Mammary epithelial cell (primary cell): ENCODE measurements at regions of chr3 and their contacts with region 1.

Region 1: DNA sequence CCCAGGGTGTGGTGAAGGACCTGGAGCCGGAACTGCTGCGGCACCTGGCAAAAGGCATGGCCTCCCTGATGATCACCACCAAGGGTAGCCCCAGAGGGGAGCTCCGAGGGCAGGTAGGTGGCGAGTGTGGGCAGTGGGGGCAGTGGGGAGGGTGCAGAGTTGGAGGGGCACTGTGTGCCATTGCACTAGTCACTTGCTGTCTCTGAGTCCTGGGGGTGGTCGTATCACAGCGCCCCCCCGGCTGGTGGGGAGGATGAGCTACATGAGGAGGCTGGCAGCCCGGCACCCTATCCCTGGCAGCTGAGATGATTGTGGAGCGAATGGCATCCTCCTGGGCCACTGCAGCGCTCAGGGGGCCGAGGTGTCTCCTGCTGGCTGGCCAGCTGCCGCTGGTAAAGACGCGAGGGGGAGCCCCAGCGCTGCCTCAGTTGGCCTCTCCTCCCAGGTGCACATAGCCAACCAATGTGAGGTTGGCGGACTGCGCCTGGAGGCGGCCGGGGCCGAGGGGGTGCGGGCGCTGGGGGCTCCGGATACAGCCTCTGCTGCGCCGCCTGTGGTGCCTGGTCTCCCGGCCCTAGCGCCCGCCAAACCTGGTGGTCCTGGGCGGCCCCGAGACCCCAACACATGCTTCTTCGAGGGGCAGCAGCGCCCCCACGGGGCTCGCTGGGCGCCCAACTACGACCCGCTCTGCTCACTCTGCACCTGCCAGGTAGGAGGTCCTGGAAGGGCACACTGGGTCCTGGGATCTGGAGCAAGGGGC is 6.4 kb downstream of the CHRD start:
- DNase-seq: no peak
- H3K4me3 ChIP-seq: no peak overlapping the region
- H3K27ac ChIP-seq: no peak overlapping the region
- H3K4me1 ChIP-seq: no peaks in the 10 kb centered on the region
- H3K27me3 ChIP-seq: peaks cover under 1% of the 10 kb centered on the region
- CTCF ChIP-seq: no peak

Region 2: DNA sequence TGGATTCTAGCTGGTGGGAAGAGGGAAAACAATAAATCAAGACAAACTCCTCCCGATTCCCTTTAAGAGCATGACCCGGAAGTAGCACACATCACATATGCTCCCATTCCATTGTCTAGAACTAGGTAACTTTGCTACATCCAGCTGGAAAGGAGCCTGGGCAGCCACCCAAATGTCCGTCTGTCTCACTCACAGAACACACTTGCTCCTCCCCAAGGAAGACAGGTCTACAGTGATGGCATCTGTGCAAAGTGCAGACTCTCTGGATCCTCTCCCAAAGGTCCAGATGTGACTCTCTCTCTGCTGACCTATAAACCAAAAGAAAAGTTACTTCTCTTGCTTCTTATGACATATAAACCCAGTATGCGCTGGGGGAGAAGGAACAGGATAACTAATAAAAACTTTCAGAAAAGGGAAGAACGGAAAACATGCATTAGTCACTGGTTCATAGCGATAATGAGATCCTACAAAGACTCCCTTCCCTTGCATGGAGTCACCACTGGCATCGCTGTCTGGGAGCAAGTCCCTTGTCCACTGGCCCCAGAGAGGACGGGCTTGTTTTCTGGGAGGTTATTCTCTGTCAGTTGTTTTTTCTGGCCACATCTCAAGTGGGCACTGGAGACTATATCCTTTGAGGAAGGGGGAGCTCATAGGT is 145.5 kb after region 1 on chr3:
- CTCF ChIA-PET with region 1: interaction called, 10 read pairs
- dilution Hi-C with region 1: no loop called
- in situ Hi-C with region 1: no loop called
- intact Hi-C with region 1: no loop called
- DNase-seq: no peak
- H3K4me3 ChIP-seq: no peak overlapping the region
- H3K27ac ChIP-seq: no peak overlapping the region
- H3K4me1 ChIP-seq: no peaks in the 10 kb centered on the region
- H3K27me3 ChIP-seq: no peaks in the 10 kb centered on the region
- CTCF ChIP-seq: no peak

Region 3: DNA sequence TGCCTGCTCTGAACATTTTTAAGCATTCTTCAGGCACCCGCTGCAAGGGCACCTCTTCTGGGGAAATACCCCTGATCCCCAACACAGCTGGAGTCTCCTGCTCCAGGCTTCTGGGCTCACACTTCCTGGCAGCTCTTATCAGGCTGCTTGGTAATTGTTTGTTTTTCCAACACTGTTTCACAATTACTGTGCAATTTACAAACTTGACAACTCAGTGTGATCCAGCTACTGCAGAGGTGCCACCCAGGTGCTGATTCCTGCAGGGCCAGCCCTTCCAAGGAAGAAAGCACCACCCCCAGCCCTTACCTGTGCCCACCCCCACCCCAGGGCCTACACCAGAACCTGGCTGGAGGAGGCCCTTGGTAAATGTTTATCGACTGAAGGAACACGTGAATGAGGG is 259.1 kb after region 1 on chr3:
- CTCF ChIA-PET with region 1: no interaction called
- dilution Hi-C with region 1: no loop called
- in situ Hi-C with region 1: no loop called
- intact Hi-C with region 1: no loop called
- DNase-seq: peak; percentile 65
- H3K4me3 ChIP-seq: no peak overlapping the region
- H3K27ac ChIP-seq: no peak overlapping the region
- H3K4me1 ChIP-seq: peaks cover 1% of the 10 kb centered on the region
- H3K27me3 ChIP-seq: no peaks in the 10 kb centered on the region
- CTCF ChIP-seq: no peak